GM23248 (cell line): ENCODE measurements at regions of chr2 and their contacts with region 1.

Region 1: DNA sequence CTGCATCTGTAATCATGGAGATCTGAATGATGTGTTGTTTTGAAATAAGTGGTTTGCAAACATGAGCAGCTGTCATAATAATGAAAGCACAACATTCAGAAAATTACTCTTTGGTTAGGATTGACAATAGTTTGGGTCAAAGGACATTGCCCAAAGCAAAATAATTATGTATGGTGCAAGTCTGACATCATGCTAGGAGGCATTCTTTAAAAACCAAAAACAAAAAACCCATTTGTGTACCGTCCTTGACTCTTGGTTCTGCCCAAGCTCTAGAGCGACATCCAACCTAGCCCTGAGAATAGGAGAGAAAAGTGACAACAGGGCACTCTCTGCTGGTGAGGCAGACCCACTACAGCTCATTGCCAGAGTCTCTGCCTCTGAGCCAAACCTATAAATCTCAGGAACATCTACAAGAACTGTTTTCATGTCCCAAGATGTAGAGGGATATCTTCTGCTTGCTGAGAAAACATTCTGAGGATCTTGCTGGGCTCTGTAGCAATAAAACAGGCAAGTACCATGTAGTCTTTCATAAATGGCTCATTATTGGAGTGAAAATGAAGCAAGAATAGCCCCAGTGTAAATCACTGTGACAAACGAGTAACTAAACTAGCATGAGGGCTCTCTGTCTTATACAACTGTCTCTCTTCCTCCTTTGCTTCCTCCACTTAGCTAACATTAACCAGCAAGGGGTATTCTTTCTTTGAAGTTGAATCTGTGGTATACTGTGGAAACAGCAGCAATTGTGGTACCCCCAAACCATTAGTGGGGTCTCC is 266.8 kb upstream of the CXCR4 start:
- DNase-seq: peak; percentile 33
- H3K4me3 ChIP-seq: no peak overlapping the region
- H3K27ac ChIP-seq: no peak overlapping the region
- H3K4me1 ChIP-seq: no peaks in the 10 kb centered on the region
- H3K27me3 ChIP-seq: no peaks in the 10 kb centered on the region; the same call in 1 of the 2 replicates

Region 2: DNA sequence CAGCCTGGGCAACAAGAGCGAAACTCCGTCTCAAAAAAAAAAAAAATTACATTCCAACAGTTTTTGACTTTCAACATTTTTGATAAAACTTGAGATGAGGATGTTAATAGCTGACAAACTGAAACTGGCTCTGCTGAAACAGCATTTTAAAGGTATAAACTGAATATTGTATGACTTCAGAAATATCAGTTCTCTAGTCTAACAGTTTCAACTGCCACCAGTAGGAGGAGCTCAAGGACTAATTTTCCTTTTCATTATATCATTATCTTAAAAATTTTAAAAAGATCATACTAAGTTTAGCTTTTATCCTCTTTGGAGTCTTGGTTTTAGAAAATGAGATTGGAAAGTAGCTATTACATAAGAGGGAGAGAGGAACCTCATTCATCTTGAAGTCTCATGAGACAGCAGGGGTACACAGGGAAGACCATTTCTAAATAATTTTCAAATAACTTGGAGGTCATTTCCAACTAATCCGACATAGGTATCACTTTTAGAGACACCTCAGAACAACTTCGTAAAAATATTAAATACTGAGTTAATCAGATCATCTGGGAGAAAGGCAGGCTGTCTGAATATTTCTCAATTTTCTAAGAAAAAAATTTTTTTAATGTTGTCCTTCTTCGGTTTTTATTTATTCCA is 470.9 kb before region 1 on chr2:
- in situ Hi-C with region 1: loop called (anchors 10 kb)
- DNase-seq: peak; percentile 51
- H3K4me3 ChIP-seq: no peak overlapping the region
- H3K27ac ChIP-seq: no peak overlapping the region
- H3K4me1 ChIP-seq: peaks cover 17% of the 10 kb centered on the region
- H3K27me3 ChIP-seq: no peaks in the 10 kb centered on the region